CD4-positive, alpha-beta memory T cell (primary cell): ENCODE measurements at regions of chr1 and their contacts with region 1.

Region 1: GRCh38 chr1:23838401-23838866 is 13.2 kb upstream of the HMGCL start:
- DNase-seq: peak; percentile 67 to 82 (median 73)
- H3K4me3 ChIP-seq: peak overlapping the region in 1 of 2 donors; percentile 49
- H3K4me3 Mint-ChIP-seq: peak overlapping the region; percentile 58 to 88 (median 80)
- H3K27ac ChIP-seq: no peak overlapping the region
- H3K27ac Mint-ChIP-seq: peak overlapping the region in 4 of 7 donors; percentile 26 to 65 (median 47)
- H3K4me1 ChIP-seq: peaks cover 8% of the 10 kb centered on the region
- H3K4me1 Mint-ChIP-seq: peaks cover 5 to 14% (median 11%) of the 10 kb centered on the region in 4 donors
- H3K27me3 ChIP-seq: no peaks in the 10 kb centered on the region
- H3K27me3 Mint-ChIP-seq: peaks cover 5 to 12% of the 10 kb centered on the region in 2 donors

Region 2: DNA sequence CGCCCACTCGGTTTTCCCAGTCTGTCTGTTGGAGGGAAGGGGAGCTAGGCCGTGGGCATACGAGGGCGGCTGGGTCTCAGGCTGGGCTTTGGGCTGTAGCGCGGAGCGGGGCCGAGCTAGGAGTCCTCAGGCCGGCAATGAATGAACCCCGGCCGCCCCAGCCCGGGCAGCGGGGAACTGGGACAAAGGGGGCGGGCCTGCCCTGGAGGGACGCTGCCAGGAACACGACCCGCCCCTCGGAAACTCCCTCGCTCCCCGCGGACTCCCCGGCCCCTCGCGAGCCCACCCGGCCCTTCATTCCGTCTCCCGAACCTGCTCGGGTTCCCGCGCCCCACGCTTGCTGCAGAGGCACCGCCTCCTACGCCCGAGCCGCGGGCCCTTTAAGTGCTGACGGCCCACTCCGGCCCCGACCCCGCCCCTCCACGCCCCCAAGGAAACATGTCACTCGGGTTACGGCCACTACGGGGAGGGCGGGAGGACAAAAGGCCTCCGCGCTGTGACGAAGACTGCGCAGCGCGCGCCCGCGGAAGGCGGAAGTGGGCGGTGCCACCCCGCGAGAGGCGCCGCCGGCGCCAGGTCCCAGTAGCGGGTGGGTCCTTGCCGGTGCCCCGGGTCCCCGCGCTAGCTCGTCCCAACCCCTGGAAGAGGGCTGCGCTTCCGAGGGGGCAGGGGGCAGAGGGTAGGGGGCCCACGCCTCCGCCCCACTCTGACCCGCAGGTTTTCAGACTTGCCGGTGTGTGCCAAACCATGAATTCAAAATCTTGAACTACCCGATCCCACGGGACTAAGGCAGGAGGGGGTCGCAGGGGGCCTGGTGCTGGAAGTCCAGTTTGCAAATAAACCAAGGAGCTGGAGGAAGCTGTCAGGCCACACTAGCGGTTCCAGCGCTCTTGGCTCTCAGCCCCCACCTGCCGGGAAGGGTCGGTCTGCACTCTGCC is 37.8 kb before region 1 on chr1 and contains the start of gene GALE:
- CTCF ChIA-PET with region 1: no interaction called
- POLR2A ChIA-PET with region 1: interaction called, 3 read pairs
- intact Hi-C with region 1: loop called (anchors 1 kb)
- DNase-seq: peak; percentile 94 to 97 (median 94)
- H3K4me3 ChIP-seq: peak within 1 kb of the TSS; percentile 70 to 88
- H3K4me3 Mint-ChIP-seq: peak within 1 kb of the TSS; percentile 80 to 98 (median 92)
- H3K27ac ChIP-seq: peak within 1 kb of the TSS; percentile 92
- H3K27ac Mint-ChIP-seq: peak within 1 kb of the TSS; percentile 84 to 97 (median 94)
- H3K4me1 ChIP-seq: peaks cover 23% of the 10 kb centered on the region
- H3K4me1 Mint-ChIP-seq: peaks cover 8 to 37% (median 21%) of the 10 kb centered on the region in 4 donors
- H3K27me3 ChIP-seq: no peaks in the 10 kb centered on the region
- H3K27me3 Mint-ChIP-seq: no peaks in the 10 kb centered on the region
- total RNA-seq, gene GALE: 11.2 to 12.0 TPM

Region 3: DNA sequence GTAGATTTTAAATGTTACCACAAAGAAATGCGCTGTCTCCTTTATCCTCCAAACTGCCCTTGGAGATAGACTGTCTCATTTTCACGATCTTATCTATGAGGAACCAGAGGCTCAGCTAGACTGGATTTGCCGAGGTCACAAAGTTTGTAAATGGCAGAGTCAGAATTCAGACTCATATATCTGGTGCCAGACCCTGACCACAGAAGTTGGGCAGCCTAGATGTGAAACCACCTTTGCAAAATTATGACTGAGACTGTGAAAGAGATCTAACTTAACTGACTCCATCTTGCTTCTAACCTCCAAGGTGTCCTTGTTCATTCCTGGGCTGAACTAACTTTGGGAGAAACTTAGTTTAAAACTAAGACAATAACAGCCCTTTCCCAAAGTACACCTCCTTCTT is 60.6 kb after region 1 on chr1:
- CTCF ChIA-PET with region 1: no interaction called
- POLR2A ChIA-PET with region 1: no interaction called
- intact Hi-C with region 1: no loop called
- DNase-seq: no peak
- H3K4me3 ChIP-seq: no peak overlapping the region
- H3K4me3 Mint-ChIP-seq: no peak overlapping the region
- H3K27ac ChIP-seq: no peak overlapping the region
- H3K27ac Mint-ChIP-seq: no peak overlapping the region
- H3K4me1 ChIP-seq: no peaks in the 10 kb centered on the region
- H3K4me1 Mint-ChIP-seq: peaks cover 7 to 17% (median 12%) of the 10 kb centered on the region in 4 donors
- H3K27me3 ChIP-seq: no peaks in the 10 kb centered on the region
- H3K27me3 Mint-ChIP-seq: peaks cover 7 to 19% of the 10 kb centered on the region in 2 donors